ENCODE measurements at regions of chr21 and their contacts with region 1.

Region 1: DNA sequence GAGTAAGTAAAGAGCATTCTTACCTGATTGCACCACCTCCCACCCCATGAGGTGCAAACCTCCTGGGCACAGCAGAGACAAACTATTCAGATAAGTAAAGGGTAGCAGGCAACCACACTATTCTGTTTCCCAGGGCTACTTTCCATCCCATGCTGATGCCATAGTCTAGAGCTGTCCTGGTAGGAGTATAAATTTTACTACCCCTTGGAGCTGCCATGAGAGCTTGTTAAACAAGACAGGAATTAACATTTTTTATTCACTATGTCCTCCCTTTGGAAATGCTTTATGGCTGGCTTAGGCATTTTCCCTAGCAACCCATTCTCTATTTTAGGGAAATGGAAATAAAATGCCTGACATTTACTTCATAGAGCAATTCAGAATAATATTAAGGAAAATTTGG is 324.6 kb upstream of the USP25 start:
- DNase-seq: no peak
- H3K4me3 ChIP-seq: no peak overlapping the region
- H3K27ac ChIP-seq: no peak overlapping the region
- H3K4me1 ChIP-seq: no peaks in the 10 kb centered on the region
- CTCF ChIP-seq: no peak

Region 2: GRCh38 chr21:15430577-15430976 is 25.4 kb after region 1 on chr21:
- CTCF ChIA-PET with region 1: no interaction called
- POLR2A ChIA-PET with region 1: no interaction called
- intact Hi-C with region 1: loop called (anchors 1 kb)
- DNase-seq: no peak
- H3K4me3 ChIP-seq: no peak overlapping the region
- H3K27ac ChIP-seq: no peak overlapping the region
- H3K4me1 ChIP-seq: no peaks in the 10 kb centered on the region
- CTCF ChIP-seq: no peak